ENCODE measurements at regions of chr12 and their contacts with region 1.

Region 1: DNA sequence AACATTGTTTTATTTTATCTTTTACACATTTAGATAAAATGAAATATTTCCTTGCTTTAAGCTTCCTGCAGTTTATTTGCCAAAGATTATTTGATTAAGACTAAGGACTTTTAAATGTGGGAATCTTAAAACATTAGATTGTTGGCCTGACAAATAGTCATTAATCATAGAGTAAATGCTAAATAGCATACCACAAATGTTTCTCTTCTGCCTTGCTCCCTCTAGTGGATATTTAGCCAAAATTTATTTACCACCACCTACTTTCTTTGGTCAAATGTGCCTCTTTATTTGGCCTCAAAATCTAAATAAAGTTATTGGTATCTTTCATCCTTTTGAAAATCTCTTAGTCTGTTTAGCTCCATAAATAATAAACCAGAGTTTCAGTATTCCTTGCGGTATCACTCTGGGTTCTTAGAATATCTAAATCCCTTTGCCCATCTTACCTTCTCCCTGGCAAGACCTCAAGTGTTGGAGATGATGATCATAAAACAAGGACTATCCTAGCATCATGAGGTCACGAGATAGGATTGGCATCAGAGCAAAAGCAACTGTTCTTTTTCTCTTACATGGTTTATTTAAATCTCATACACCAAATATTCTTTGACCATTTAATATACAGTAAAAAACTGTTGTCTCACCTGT is 150.6 kb upstream of the AEBP2 start:
- DNase-seq: no peak
- ATAC-seq: peak in 4 of 8 donors; percentile 34 to 54 (median 45)
- H3K4me3 ChIP-seq: no peak overlapping the region
- H3K27ac ChIP-seq: no peak overlapping the region
- H3K4me1 ChIP-seq: peaks cover 0 to 8% (median 0%) of the 10 kb centered on the region in 9 donors
- H3K27me3 ChIP-seq: no peaks in the 10 kb centered on the region
- CTCF ChIP-seq: peak; percentile 23 to 85 (median 70)

Region 2: DNA sequence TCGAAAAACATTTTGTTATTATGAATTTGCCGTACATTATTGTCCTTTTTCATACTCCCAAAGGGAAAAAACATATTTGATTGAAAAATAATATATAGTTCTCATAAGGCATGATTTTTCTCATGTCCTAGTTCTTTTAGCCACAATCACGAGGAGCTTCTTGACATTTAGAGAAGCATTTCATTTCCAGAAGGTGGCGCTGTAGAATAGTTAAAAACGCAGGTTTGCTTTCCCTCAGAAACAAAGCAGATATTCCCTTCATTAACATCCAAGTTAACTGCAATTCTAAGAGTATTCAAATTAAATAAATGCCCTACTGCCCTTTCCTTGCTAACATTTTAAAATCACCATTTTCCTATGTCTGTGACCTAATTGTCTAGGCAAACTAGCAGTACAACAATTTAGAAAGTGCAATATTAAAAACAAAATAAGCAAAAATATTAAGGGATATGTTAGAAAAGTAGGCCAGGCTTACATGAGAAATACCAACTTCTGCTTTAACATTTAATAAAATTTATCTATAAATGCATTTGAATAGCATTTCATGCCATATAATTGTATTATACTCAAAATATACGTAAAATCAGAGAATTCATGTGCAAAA is 1038.3 kb before region 1 on chr12:
- intact Hi-C with region 1: loop called in 1 of 10 experiments (anchors 10 kb)
- DNase-seq: peak in 1 of 2 donors; percentile 28
- ATAC-seq: no peak
- H3K4me3 ChIP-seq: no peak overlapping the region
- H3K27ac ChIP-seq: no peak overlapping the region
- H3K4me1 ChIP-seq: no peaks in the 10 kb centered on the region
- H3K27me3 ChIP-seq: no peaks in the 10 kb centered on the region
- CTCF ChIP-seq: peak; percentile 40 to 82 (median 73)

Region 3: DNA sequence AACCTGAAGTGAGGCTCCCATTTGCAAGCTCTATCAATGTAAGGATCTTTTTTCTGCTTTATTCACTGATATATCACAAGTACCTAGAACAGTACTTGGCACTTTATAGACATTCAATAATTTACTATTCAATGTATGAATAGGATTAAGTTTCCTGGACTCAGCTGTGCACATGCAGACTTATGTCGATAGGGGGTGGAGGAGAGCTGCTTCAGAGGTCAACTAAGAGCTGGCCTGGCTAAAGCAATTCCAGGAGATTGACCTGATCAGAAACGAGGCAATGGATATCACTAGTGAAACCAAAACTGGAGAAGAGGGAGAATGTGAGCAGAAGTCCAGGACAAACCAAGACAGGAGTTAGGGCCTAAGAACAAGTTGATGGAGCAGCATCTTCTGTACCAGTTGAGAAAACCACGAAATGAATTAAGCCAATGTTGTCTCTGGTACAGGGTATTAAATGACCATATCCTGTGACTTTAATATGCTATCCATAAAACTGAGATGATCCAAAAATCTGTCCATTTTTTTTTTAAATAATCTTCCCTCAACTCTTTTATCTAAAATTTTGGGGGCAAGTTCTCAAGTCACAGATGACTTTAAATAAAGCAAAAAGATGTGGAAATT is 858.2 kb before region 1 on chr12:
- intact Hi-C with region 1: loop called in 2 of 10 experiments (anchors 5 to 10 kb)
- DNase-seq: peak in 1 of 2 donors; percentile 37
- ATAC-seq: peak; percentile 73 to 94 (median 88)
- H3K4me3 ChIP-seq: no peak overlapping the region
- H3K27ac ChIP-seq: no peak overlapping the region
- H3K4me1 ChIP-seq: peaks cover 0 to 25% (median 0%) of the 10 kb centered on the region in 9 donors
- H3K27me3 ChIP-seq: no peaks in the 10 kb centered on the region
- CTCF ChIP-seq: peak; percentile 42 to 89 (median 80)

Region 4: GRCh38 chr12:18861287-18861858 is 427.4 kb before region 1 on chr12:
- intact Hi-C with region 1: loop called in 1 of 10 experiments (anchors 10 kb)
- DNase-seq: no peak
- ATAC-seq: no peak
- H3K4me3 ChIP-seq: no peak overlapping the region
- H3K27ac ChIP-seq: no peak overlapping the region
- H3K4me1 ChIP-seq: peaks cover 0 to 10% (median 0%) of the 10 kb centered on the region in 9 donors
- H3K27me3 ChIP-seq: no peaks in the 10 kb centered on the region
- CTCF ChIP-seq: peak in 8 of 9 donors; percentile 19 to 61 (median 50)

Region 5: DNA sequence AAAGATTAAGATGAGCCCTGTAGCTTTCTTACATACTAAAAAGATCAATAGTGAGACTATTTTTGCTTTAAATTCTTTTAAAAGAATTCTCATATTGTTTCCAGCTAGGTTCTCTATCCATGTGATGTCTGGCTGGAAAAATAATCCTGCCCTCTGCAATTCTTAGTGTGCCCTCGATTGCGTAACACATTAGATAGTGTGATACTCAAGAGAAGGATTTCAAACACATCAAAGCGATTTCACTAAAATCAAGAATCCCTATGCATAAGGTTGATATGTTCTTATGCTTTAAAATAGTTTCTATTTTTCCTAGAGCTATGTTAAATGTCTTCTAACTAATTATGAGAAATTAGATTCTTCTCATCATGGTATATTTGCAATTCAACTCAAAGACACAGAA is 286.5 kb before region 1 on chr12:
- intact Hi-C with region 1: no loop called
- DNase-seq: no peak
- ATAC-seq: no peak
- H3K4me3 ChIP-seq: no peak overlapping the region
- H3K27ac ChIP-seq: no peak overlapping the region
- H3K4me1 ChIP-seq: no peaks in the 10 kb centered on the region
- H3K27me3 ChIP-seq: no peaks in the 10 kb centered on the region
- CTCF ChIP-seq: no peak

Region 6: GRCh38 chr12:19031032-19031431 is 257.7 kb before region 1 on chr12:
- intact Hi-C with region 1: loop called in 1 of 10 experiments (anchors 5 kb)
- DNase-seq: no peak
- ATAC-seq: peak in 5 of 8 donors; percentile 30 to 59 (median 50)
- H3K4me3 ChIP-seq: no peak overlapping the region
- H3K27ac ChIP-seq: no peak overlapping the region
- H3K4me1 ChIP-seq: peaks cover 0 to 14% (median 4%) of the 10 kb centered on the region in 9 donors
- H3K27me3 ChIP-seq: no peaks in the 10 kb centered on the region
- CTCF ChIP-seq: no peak

Region 7: DNA sequence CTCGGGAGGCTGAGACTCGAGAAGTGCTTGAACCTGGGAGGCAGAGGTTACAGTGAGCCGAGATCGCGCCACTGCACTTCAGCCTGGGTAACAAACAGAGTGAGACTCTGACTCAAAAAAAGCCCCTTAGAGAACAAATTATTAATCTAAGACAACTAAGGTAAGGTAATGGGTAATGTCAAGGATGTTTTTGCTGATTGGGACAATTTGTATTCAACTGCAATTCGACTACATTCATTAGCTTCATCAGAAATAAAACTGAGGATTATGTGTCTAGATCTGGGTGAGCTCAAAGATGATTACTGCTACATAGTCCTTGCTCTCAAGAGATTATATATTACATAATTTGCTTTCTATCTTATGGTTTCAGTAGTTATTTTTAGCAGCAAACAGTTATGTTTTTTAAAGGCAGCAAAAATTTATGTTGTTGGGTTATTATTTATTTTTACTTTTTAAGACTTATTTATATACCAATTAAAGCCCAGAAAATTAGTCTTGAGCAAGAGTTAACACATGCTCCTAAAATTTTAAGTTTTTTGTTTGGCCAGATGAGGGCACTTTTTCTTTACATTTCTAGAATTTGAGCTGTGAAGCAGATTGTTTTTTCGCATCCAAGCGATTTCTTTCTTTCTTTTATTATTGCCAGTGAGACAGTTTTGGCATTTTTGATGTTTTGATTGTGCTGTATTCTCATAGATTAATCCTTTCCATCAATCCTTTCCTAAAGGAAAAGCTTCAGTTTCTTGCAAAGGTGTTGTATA is 106.9 kb before region 1 on chr12:
- intact Hi-C with region 1: loop called in 4 of 10 experiments (anchors 5 to 10 kb)
- DNase-seq: no peak
- ATAC-seq: no peak
- H3K4me3 ChIP-seq: no peak overlapping the region
- H3K27ac ChIP-seq: peak overlapping the region in 6 of 10 donors; percentile 4 to 57 (median 34)
- H3K4me1 ChIP-seq: peaks cover 2 to 64% (median 28%) of the 10 kb centered on the region in 9 donors
- H3K27me3 ChIP-seq: no peaks in the 10 kb centered on the region
- CTCF ChIP-seq: peak in 5 of 9 donors; percentile 13 to 34 (median 25)

Measured in heart right ventricle (tissue), 16 donors.